ENCODE measurements at regions of chr1 and their contacts with region 1.

Region 1: DNA sequence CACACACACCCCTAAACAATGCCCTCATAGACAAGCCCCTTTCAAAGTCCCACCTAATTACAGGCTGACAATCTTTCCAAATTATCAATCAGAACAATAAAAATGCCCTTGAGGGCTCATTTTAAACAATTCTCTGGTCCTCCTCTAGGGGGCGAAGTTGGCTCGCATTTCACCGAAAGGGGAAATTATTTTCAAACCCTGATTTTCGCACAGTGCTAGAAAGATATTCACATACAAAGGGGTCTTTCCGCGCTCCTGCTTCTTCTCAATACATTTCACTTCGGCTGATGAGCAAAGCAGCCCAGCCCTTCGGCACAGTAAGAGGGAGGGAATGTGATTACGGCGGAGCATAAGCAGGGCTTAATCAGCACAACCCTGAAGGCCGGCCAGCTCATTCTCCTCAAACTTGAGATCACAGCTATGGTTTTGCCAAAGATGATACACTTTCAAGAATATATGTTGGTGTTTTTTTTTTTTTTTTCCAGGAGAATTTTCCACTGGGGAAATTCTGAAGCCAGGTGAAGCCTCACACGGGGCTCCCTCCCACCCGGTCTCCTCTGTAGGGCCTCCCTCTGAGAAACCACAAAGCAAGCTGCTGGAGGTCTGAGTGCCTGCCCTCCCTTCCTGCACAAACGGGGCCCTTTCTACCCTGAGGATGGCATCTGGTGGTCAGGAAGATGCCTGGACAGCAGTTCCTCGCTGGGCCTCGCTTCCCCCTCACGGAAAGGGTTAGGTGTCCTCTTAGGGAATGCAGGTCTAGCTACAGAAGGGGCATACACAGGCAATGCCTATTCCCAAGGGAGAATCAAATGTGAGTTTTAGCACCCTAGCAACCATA is 66.9 kb downstream of the GNG12 start:
- DNase-seq: peak; percentile 56
- ATAC-seq: peak; percentile 74
- H3K4me3 Mint-ChIP-seq: no peak overlapping the region
- H3K27ac Mint-ChIP-seq: no peak overlapping the region
- H3K4me1 Mint-ChIP-seq: peaks cover 28% of the 10 kb centered on the region
- H3K27me3 Mint-ChIP-seq: peaks cover 27% of the 10 kb centered on the region
- CTCF ChIP-seq: peak; percentile 66

Region 2: GRCh38 chr1:67535474-67535873 is 230.9 kb before region 1 on chr1:
- CTCF ChIA-PET with region 1: interaction called, 81 read pairs
- POLR2A ChIA-PET with region 1: no interaction called
- intact Hi-C with region 1: loop called (anchors 2 kb)
- DNase-seq: peak; percentile 81
- ATAC-seq: peak; percentile 82
- H3K4me3 Mint-ChIP-seq: no peak overlapping the region
- H3K27ac Mint-ChIP-seq: no peak overlapping the region
- H3K4me1 Mint-ChIP-seq: peaks cover 10% of the 10 kb centered on the region
- H3K27me3 Mint-ChIP-seq: peaks cover 2% of the 10 kb centered on the region
- CTCF ChIP-seq: peak; percentile 85

Region 3: GRCh38 chr1:67749844-67750689 is 16.3 kb before region 1 on chr1:
- CTCF ChIA-PET with region 1: interaction called, 24 read pairs
- POLR2A ChIA-PET with region 1: no interaction called
- intact Hi-C with region 1: no loop called
- DNase-seq: no peak
- ATAC-seq: peak; percentile 45
- H3K4me3 Mint-ChIP-seq: no peak overlapping the region
- H3K27ac Mint-ChIP-seq: no peak overlapping the region
- H3K4me1 Mint-ChIP-seq: peaks cover 28% of the 10 kb centered on the region
- H3K27me3 Mint-ChIP-seq: peaks cover 10% of the 10 kb centered on the region
- CTCF ChIP-seq: no peak

Region 4: GRCh38 chr1:67777440-67777839 is 11.1 kb after region 1 on chr1:
- CTCF ChIA-PET with region 1: interaction called, 10 read pairs
- POLR2A ChIA-PET with region 1: no interaction called
- intact Hi-C with region 1: no loop called
- DNase-seq: no peak
- ATAC-seq: no peak
- H3K4me3 Mint-ChIP-seq: no peak overlapping the region
- H3K27ac Mint-ChIP-seq: no peak overlapping the region
- H3K4me1 Mint-ChIP-seq: no peaks in the 10 kb centered on the region
- H3K27me3 Mint-ChIP-seq: peaks cover 23% of the 10 kb centered on the region
- CTCF ChIP-seq: no peak

Region 5: GRCh38 chr1:67853704-67854103 is 87.3 kb after region 1 on chr1:
- CTCF ChIA-PET with region 1: interaction called, 14 read pairs
- POLR2A ChIA-PET with region 1: no interaction called
- intact Hi-C with region 1: no loop called
- DNase-seq: peak; percentile 49
- ATAC-seq: no peak
- H3K4me3 Mint-ChIP-seq: no peak overlapping the region
- H3K27ac Mint-ChIP-seq: no peak overlapping the region
- H3K4me1 Mint-ChIP-seq: no peaks in the 10 kb centered on the region
- H3K27me3 Mint-ChIP-seq: peaks cover 13% of the 10 kb centered on the region
- CTCF ChIP-seq: peak; percentile 23

Measured in activated CD8-positive, alpha-beta T cell treated with anti-CD3 and anti-CD28 coated beads for 36 hours (primary cell).